ENCODE measurements at regions of chr10 and their contacts with region 1.

Region 1: DNA sequence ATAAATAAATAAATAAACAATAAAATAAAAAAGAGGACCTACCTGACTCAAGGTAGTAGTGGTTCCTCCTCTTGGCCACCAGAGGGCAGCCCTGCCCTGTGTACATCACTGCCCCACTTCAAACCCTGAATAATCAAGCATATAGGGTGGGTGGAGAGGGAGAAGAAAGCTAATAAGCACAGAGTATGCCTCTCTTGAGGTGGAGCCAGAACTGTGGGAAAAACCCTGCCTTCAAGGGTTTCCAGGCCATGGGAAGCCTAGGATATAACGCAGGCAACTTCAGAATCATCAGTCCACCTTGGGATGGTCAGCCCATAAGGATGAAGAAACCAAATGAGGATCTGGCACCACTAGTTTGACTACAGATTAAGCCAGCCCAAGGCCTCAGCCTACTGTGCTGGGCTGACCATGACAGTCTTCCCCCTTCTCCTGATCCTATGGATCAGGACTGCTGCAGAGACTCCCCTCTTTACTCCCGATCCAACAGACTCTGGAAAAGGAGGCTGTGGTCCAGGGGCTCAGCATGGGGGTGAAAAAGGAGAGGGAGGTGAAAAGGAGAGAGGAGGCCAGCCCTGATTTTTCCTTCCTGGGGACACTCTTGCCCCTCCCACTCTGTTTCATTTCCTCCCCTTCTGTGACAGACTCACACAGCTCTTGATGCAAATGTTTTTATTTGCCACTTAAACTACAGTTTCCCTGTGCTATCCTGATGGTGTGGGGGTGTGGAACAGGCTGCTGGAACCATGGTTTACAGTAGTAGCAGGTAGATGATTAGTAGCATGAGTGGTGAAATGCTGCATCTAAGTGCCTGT is 10.1 kb downstream of the AVPI1 start:
- DNase-seq: peak; percentile 48
- ATAC-seq: peak; percentile 93
- H3K4me3 Mint-ChIP-seq: no peak overlapping the region
- H3K27ac Mint-ChIP-seq: no peak overlapping the region
- H3K4me1 Mint-ChIP-seq: no peaks in the 10 kb centered on the region
- H3K27me3 Mint-ChIP-seq: no peaks in the 10 kb centered on the region
- CTCF ChIP-seq: peak; percentile 87

Region 2: DNA sequence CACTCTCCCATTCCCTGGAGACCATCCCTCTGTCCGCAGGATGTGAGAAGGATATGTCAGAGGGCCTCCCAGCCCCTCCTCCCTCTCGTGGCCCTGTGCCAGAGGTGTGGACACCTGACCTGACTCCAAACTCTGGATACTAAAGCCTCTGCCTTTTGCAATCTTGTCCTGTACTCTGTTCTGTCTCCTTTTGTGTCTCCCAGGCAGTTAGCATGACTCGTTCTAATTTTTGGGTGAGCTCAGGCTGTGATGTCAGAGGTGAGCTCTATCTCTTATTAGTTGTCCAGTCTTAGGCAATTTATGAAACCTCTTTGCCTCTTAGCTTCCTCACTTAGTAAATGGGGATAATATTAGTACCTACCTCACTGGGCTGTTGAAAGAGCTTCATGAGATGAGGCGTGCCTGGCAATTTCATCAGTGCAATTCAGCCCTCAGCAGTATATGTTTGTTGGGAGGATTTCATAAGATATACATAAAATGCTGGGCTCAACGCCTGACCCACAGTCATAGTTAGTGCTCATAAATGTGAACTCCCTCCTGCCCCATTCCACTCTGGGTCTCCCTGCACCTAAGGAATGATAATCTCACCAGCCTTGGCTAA is 47.5 kb after region 1 on chr10:
- CTCF ChIA-PET with region 1: interaction called, 20 read pairs
- POLR2A ChIA-PET with region 1: no interaction called
- DNase-seq: no peak
- ATAC-seq: no peak
- H3K4me3 Mint-ChIP-seq: no peak overlapping the region
- H3K27ac Mint-ChIP-seq: no peak overlapping the region
- H3K4me1 Mint-ChIP-seq: peaks cover 15% of the 10 kb centered on the region
- H3K27me3 Mint-ChIP-seq: no peaks in the 10 kb centered on the region; the same call in 1 of the 2 replicates
- CTCF ChIP-seq: no peak

Region 3: GRCh38 chr10:97731346-97732051 is 54.5 kb after region 1 on chr10:
- CTCF ChIA-PET with region 1: interaction called, 20 read pairs
- POLR2A ChIA-PET with region 1: interaction called, 3 read pairs
- DNase-seq: peak; percentile 71
- ATAC-seq: peak; percentile 88
- H3K4me3 Mint-ChIP-seq: no peak overlapping the region
- H3K27ac Mint-ChIP-seq: no peak overlapping the region
- H3K4me1 Mint-ChIP-seq: peaks cover 5% of the 10 kb centered on the region
- H3K27me3 Mint-ChIP-seq: peaks cover 33% of the 10 kb centered on the region
- CTCF ChIP-seq: peak; percentile 56

Measured in WTC11 (cell line).